A549 (cell line): ENCODE measurements at regions of chr11 and their contacts with region 1.

Region 1: DNA sequence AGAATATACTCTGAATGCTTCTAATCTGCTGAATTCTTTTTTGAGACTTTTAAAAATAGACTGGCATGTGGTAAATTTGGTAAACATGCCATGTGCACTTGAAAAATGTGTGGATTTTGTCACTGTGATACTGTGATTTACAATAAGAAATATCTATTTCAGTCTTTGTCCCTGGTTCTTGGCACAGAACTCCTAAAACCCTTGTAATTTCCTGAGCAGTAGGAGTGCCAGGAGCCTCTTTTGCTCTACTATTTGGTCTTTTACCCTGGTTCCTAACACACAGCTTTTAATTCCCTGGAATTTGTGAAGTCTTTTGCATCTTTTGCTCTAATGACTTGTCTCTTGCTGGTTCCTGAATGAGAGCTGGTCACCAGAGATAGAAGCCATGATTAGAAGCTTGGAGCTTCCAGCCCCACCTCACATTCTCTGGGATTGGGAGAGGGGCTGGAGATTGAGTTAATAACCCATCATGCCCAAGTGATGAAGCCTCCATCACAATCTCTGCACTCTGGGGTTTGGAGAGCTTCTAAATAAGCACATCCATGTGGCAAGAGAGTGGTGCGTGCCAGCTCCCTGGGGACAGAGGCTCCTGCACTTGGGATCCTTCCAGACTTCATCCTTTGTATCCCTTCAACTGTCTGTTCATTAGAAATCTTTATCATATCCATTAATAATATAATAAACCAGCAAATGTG is 27.2 kb upstream of the SYT13 start:
- DNase-seq: no peak
- ATAC-seq: no peak
- H3K4me3 ChIP-seq: no peak overlapping the region
- H3K27ac ChIP-seq: no peak overlapping the region
- H3K4me1 ChIP-seq: no peaks in the 10 kb centered on the region
- CTCF ChIP-seq: no peak
- EP300 ChIP-seq: no peak
- POLR2A ChIP-seq: no peak
- RAD21 ChIP-seq: no peak

Region 2: GRCh38 chr11:45294499-45294898 is 18.8 kb before region 1 on chr11:
- CTCF ChIA-PET with region 1: interaction called, 12 read pairs
- POLR2A ChIA-PET with region 1: no interaction called
- DNase-seq: no peak
- ATAC-seq: no peak
- H3K4me3 ChIP-seq: no peak overlapping the region
- H3K27ac ChIP-seq: no peak overlapping the region
- H3K4me1 ChIP-seq: peaks cover 6% of the 10 kb centered on the region
- CTCF ChIP-seq: no peak
- EP300 ChIP-seq: no peak
- POLR2A ChIP-seq: no peak
- RAD21 ChIP-seq: no peak

Region 3: GRCh38 chr11:45332276-45332934 is 19.1 kb after region 1 on chr11:
- CTCF ChIA-PET with region 1: interaction called, 13 read pairs
- POLR2A ChIA-PET with region 1: no interaction called
- DNase-seq: peak; percentile 29 to 64
- ATAC-seq: peak; percentile 69 to 88; a peak in 5 of 6 replicates
- H3K4me3 ChIP-seq: no peak overlapping the region
- H3K27ac ChIP-seq: no peak overlapping the region
- H3K4me1 ChIP-seq: no peaks in the 10 kb centered on the region; the same call in 2 of the 3 replicates
- CTCF ChIP-seq: peak; percentile 87
- EP300 ChIP-seq: no peak
- POLR2A ChIP-seq: no peak
- RAD21 ChIP-seq: peak; percentile 75 to 90